GM12878 (cell line): ENCODE measurements at regions of chr1 and their contacts with region 1.

Region 1: GRCh38 chr1:46616277-46617107 is at the start of gene MOB3C:
- DNase-seq: peak; percentile 15
- ATAC-seq: peak; percentile 82
- H3K4me3 ChIP-seq: peak within 1 kb of the TSS; percentile 96
- H3K27ac ChIP-seq: peak within 1 kb of the TSS; percentile 84
- H3K4me1 ChIP-seq: peaks cover 48% of the 10 kb centered on the region
- H3K27me3 ChIP-seq: no peaks in the 10 kb centered on the region
- CTCF ChIP-seq: no peak
- EP300 ChIP-seq: no peak
- POLR2A ChIP-seq: peak; percentile 87
- RAD21 ChIP-seq: no peak
- polyA plus RNA-seq, gene MOB3C: 1.0 to 4.1 TPM

Region 2: GRCh38 chr1:46603858-46604549 is 12.5 kb before region 1 on chr1 and contains the start of gene MKNK1:
- CTCF ChIA-PET with region 1: interaction called, 30 read pairs
- POLR2A ChIA-PET with region 1: interaction called, 124 read pairs
- RAD21 ChIA-PET with region 1: interaction called, 41 read pairs
- SMC1A ChIA-PET with region 1: interaction called, 53 read pairs
- in situ Hi-C with region 1: no loop called
- intact Hi-C with region 1: no loop called
- DNase-seq: peak; percentile 87
- ATAC-seq: peak; percentile 98
- H3K4me3 ChIP-seq: peak within 1 kb of the TSS; percentile 67
- H3K27ac ChIP-seq: peak within 1 kb of the TSS; percentile 74
- H3K4me1 ChIP-seq: 0 out of 2 replicates have a peak, but pooled peaks cover 3% of the 10 kb centered on the region
- H3K27me3 ChIP-seq: no peaks in the 10 kb centered on the region
- CTCF ChIP-seq: 0 out of 6 replicates have a peak, but pooled peaks of 1 of the 3 experiments have one; percentile 9
- EP300 ChIP-seq: no peak
- POLR2A ChIP-seq: peak; percentile 96
- RAD21 ChIP-seq: 0 out of 2 replicates have a peak, but pooled peaks have one; percentile 2
- polyA plus RNA-seq, gene MKNK1: 13.7 to 17.0 TPM

Region 3: DNA sequence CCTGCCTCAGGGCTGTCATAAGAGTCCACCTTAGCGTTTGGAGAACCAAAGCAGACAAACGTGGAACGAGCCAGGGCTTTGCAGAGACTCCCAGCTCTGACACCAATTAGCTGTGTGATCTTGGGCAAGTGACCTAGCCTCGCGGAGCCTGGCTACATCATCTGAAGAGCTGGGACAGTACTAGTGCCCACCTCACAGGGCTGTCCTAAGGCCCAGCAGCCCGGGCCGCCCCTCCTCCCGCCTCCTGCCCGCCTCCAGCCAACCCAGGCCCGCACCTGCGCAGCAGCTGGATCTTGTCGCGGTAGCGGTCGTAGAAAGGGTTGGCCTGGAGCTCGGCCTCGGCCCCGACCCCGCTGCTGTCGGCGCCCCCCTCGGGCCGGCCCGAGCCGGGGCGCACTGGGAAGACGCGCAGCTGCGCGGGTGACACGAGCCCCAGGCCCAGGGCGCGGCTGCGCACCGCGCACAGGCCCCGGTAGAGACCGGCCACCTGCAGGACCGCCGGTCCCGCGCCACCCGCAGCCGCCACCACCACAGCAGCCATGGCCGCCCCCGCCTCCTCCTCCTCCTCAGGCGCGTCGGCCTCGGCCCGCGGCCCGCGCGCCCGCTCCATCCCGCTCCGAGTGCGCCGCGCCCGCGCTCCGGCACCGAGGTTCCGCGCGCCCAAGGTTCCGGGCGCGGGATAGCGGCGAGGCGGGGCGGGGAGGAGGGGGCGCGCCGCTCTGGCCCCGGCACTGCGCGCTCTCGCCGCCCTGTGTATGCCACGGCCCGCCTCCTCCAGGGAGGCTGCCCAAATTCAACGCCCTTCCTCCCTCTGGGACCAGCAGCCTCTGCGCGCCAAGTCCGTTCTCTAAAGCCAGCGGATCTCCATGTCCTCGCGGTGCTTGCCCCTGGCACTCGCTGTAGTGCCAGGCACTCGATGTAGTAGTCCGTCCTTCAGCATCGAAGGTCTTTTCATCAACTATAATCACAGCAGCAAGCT is 51.6 kb after region 1 on chr1 and contains the start of gene ATPAF1:
- CTCF ChIA-PET with region 1: interaction called, 3 read pairs
- POLR2A ChIA-PET with region 1: interaction called, 12 read pairs
- RAD21 ChIA-PET with region 1: interaction called, 11 read pairs
- SMC1A ChIA-PET with region 1: interaction called, 8 read pairs
- in situ Hi-C with region 1: no loop called
- intact Hi-C with region 1: loop called (anchors 5 kb)
- DNase-seq: peak; percentile 34
- ATAC-seq: peak; percentile 92
- H3K4me3 ChIP-seq: peak within 1 kb of the TSS; percentile 89
- H3K27ac ChIP-seq: peak within 1 kb of the TSS; percentile 47
- H3K4me1 ChIP-seq: peaks cover 13% of the 10 kb centered on the region
- H3K27me3 ChIP-seq: no peaks in the 10 kb centered on the region
- CTCF ChIP-seq: no peak
- EP300 ChIP-seq: no peak
- POLR2A ChIP-seq: peak; percentile 84
- RAD21 ChIP-seq: no peak
- polyA plus RNA-seq, gene ATPAF1: 15.2 to 32.6 TPM

Region 4: DNA sequence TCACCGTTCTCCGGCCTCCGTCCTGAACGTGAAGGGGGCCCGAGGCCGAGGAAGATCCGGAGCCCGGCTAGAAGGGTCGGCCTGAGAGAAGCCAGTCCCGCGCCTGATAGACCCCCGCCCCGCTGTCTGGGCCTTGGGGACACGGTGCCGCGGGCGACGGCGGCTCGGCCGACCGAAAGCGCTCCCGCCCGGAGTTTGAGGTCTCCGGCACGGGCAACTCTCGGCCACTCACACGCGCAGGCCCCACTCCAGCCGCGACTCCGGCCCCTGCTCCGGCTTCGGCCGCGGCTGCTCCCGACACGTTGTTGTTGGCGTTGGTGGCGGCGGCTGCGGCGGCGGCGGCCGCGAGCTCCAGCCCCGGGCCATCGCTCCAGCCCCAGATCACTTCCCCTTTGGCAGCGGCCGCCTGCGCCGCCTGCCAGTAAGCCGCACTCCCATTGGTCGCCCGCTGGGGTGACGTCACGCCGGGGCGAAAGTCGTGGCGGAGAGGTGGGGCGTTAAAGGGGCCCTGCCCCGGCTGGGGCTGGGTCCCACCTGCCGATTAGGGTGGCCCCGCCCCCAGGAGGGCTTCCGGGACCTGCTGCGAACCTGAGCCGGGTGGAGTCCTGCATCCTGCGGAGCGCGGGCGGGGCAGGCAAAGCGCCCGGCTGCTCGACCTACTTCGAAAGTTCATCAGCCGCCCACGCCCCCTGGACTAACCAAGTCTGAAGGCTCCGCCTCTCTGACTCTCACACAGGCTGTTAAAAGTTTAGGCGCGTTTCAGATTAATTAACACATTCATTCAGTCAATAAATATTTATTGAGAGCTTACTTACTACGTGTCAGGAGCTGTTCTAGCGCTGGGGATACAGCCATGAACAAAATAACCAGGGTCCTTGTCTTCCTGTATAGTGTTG is 102.5 kb after region 1 on chr1 and contains the start of gene EFCAB14:
- CTCF ChIA-PET with region 1: interaction called, 20 read pairs
- POLR2A ChIA-PET with region 1: interaction called, 5 read pairs
- RAD21 ChIA-PET with region 1: interaction called, 7 read pairs
- SMC1A ChIA-PET with region 1: interaction called, 12 read pairs
- in situ Hi-C with region 1: no loop called
- intact Hi-C with region 1: loop called (anchors 5 kb)
- DNase-seq: peak; percentile 91
- ATAC-seq: peak; percentile 99
- H3K4me3 ChIP-seq: peak within 1 kb of the TSS; percentile 83
- H3K27ac ChIP-seq: peak within 1 kb of the TSS; percentile 87
- H3K4me1 ChIP-seq: peaks cover 13% of the 10 kb centered on the region
- H3K27me3 ChIP-seq: no peaks in the 10 kb centered on the region; a peak in 1 of 4 replicates
- CTCF ChIP-seq: no peak
- EP300 ChIP-seq: no peak
- POLR2A ChIP-seq: peak; percentile 96
- RAD21 ChIP-seq: no peak
- polyA plus RNA-seq, gene EFCAB14: 7.8 to 12.7 TPM